ENCODE measurements at regions of chr1 and their contacts with region 1.

Region 1: DNA sequence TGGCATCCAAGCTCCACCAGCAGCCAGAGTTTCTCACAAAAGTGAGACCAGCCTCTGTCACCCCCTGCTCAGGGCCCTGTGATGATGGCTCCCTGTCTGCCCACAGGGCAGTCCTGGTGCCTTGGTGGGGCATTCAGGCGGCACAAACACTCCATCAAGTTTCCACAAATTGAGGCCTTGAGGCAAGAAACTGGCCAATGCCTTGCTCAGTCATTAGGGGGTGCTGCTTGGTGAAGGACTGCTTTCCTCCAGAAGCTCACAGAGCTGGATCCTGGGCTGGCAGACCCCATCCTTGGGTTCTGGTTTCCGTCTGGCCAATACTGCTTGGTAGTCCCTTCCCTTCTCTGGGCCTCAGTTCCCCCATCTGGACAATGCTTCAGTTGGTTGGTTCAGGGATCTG is 12.5 kb upstream of the AHDC1 start:
- DNase-seq: no peak
- H3K4me3 ChIP-seq: no peak overlapping the region
- H3K27ac ChIP-seq: no peak overlapping the region
- H3K4me1 ChIP-seq: peaks cover 3% of the 10 kb centered on the region
- H3K27me3 ChIP-seq: no peaks in the 10 kb centered on the region
- CTCF ChIP-seq: peak in 1 of 3 experiments; percentile 9
- POLR2A ChIP-seq: no peak

Region 2: GRCh38 chr1:27662707-27663393 is 46.4 kb after region 1 on chr1:
- intact Hi-C with region 1: loop called (anchors 10 kb)
- DNase-seq: peak; percentile 93
- H3K4me3 ChIP-seq: no peak overlapping the region
- H3K27ac ChIP-seq: no peak overlapping the region
- H3K4me1 ChIP-seq: peaks cover 10% of the 10 kb centered on the region
- H3K27me3 ChIP-seq: no peaks in the 10 kb centered on the region
- CTCF ChIP-seq: peak; percentile 98 to 99 (median 98)
- POLR2A ChIP-seq: no peak

Measured in testis (tissue), 5 donors.